ENCODE measurements at regions of chr20 and their contacts with region 1.

Region 1: DNA sequence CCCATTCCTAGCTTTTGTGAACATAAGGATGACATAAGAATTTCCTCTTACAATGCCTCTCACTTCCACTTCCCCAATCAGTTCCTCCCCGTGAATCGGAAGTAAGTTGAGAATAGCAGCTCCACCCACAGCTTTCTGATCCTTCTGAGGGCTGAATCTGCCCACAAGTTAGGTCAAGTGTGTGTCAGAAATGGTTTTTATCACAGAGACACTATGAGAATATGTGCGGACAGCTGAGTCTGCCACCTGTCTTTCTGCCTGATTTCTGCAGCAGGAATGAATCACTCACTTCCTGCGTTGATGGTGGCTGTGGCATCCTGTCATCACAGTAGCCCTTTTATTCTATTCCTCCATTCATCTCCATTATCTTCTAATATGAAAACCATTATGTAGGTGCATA is 70.2 kb downstream of the RIN2 start:
- DNase-seq: peak; percentile 52
- H3K4me3 Mint-ChIP-seq: no peak overlapping the region
- H3K27ac Mint-ChIP-seq: no peak overlapping the region
- H3K4me1 Mint-ChIP-seq: peaks cover 9% of the 10 kb centered on the region
- H3K27me3 Mint-ChIP-seq: peaks cover 9% of the 10 kb centered on the region

Region 2: DNA sequence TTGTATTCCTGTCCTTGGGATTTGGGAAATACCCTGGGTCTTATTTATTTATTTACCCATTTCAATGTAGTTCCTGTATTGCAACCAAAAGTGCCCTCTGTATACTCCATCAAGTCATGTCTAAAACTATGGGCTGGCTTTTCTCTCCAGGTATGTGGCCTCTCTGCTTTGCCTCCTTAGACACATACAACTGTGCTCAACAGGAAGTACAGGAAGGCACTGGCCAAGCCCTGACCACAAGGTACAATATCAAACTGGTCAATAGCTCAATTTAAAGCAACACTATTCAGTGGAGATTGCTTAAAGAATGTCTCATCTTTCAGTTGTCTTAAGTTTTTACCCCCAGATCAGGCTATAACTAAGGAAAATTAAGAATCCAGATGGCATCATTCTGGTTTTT is 658.1 kb before region 1 on chr20:
- CTCF ChIA-PET with region 1: no interaction called
- intact Hi-C with region 1: no loop called
- DNase-seq: no peak
- H3K4me3 Mint-ChIP-seq: no peak overlapping the region
- H3K27ac Mint-ChIP-seq: no peak overlapping the region
- H3K4me1 Mint-ChIP-seq: no peaks in the 10 kb centered on the region
- H3K27me3 Mint-ChIP-seq: peaks cover 26% of the 10 kb centered on the region

Region 3: DNA sequence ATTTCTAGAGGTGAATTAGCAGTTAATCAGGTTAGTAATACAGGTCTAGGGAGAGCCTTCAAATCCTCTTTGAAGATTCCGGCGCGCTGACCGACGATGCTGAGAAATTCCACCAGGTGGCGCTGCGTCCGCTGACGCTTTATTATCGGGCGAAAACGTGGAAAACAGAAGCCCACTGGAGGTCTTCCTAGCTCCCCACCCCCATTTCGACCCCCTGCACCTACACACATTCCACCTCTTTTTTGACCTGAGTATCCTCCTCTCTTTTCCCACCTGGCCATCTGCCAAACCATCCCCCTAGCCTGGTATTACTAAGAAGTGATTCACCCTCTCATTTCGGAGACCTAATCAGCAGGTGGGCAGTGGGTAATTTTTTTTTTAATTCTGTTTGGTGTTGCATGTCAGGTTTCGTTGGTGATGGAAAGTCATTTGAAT is 135.5 kb before region 1 on chr20:
- CTCF ChIA-PET with region 1: interaction called, 3 read pairs
- intact Hi-C with region 1: loop called (anchors 1 kb)
- DNase-seq: peak; percentile 64
- H3K4me3 Mint-ChIP-seq: no peak overlapping the region
- H3K27ac Mint-ChIP-seq: no peak overlapping the region
- H3K4me1 Mint-ChIP-seq: peaks cover 2% of the 10 kb centered on the region
- H3K27me3 Mint-ChIP-seq: peaks cover 26% of the 10 kb centered on the region

Region 4: GRCh38 chr20:19737025-19737424 is 91.2 kb before region 1 on chr20:
- CTCF ChIA-PET with region 1: no interaction called
- intact Hi-C with region 1: loop called (anchors 2 kb)
- DNase-seq: peak; percentile 42
- H3K4me3 Mint-ChIP-seq: no peak overlapping the region
- H3K27ac Mint-ChIP-seq: no peak overlapping the region
- H3K4me1 Mint-ChIP-seq: peaks cover 16% of the 10 kb centered on the region
- H3K27me3 Mint-ChIP-seq: peaks cover 21% of the 10 kb centered on the region

Region 5: DNA sequence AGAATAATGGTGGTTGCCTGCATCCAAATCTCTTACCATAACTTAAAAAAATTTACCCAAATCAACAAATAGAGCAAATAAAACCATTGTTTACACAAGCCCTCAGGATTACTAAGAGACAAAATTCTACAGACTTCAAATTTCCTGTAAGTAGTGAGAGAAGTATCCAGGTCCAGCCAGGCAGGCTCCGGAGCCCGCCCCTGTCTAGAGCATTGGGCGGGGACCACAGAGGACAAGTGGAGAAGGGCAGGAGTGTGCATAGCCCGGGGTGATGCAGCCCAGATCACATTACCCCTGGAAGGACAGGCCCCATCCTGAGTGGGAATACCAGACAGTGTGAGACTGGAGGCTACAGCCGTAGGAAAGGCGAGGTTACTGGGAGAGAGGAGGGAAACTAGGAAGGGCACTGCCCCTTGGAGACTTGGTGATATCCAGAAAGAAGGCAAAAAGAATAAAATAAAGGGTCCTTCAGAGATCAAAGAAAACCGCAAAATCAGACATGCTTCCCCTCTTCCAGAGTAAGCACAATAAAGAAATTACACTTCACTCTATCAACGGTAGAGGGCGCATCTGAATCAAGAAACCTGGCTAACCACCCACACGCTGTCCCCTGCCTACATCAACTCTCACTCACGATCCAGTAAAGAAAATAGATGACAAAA is 43.6 kb before region 1 on chr20:
- CTCF ChIA-PET with region 1: interaction called, 3 read pairs
- intact Hi-C with region 1: loop called (anchors 5 kb)
- DNase-seq: peak; percentile 42
- H3K4me3 Mint-ChIP-seq: no peak overlapping the region
- H3K27ac Mint-ChIP-seq: no peak overlapping the region
- H3K4me1 Mint-ChIP-seq: no peaks in the 10 kb centered on the region
- H3K27me3 Mint-ChIP-seq: peaks cover 10% of the 10 kb centered on the region